PC-3 (cell line): ENCODE measurements at regions of chr3 and their contacts with region 1.

Region 1: DNA sequence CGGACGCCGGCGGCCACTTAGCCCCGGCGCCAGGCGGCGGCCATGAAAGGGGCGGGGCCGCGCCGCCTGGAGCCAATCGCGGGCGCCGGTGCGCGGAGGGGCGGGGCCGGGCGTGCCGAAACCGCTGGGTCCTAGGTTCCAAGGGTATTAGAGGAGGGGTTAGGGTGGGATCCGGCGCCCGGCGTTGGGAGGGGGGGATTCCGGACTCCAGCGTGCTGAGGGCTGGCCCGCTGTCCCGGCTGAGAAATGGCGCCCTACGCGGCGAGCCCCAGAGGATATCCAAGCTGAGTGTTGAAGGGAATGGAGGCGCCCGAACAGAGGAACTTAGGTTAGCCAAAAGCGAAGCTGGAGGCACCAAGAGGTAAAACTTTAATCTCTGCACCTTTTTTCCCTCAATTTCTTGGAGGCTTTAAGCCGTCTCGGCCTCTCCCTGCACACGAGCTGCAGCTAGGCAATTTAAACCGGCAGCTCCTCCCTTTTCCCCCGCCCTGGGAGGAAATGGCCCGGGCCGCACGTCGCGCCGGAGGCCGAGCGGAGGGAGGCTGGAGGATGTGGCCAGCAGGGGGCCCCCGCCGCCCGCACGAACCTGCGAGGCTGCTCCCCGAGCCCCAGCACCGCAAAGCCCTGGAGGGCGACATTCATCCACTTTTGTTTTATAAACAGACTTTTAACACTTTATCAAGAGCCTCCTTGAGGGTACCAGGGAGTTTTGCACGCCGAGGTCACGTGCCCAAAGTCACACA is at the start of gene XXYLT1:
- DNase-seq: peak; percentile 91
- ATAC-seq: peak; percentile 81
- H3K4me3 ChIP-seq: peak within 1 kb of the TSS; percentile 82
- H3K27ac ChIP-seq: peak within 1 kb of the TSS; percentile 57
- H3K4me1 ChIP-seq: peaks cover 21% of the 10 kb centered on the region
- H3K27me3 ChIP-seq: no peaks in the 10 kb centered on the region
- CTCF ChIP-seq: peak; percentile 98
- total RNA-seq, gene XXYLT1: 25.5 and 27.8 TPM in 2 replicates

Region 2: GRCh38 chr3:195522254-195523023 is 251.2 kb after region 1 on chr3:
- CTCF ChIA-PET with region 1: interaction called, 22 read pairs
- POLR2A ChIA-PET with region 1: no interaction called
- intact Hi-C with region 1: loop called (anchors 1 kb)
- DNase-seq: peak; percentile 57
- ATAC-seq: no peak
- H3K4me3 ChIP-seq: no peak overlapping the region
- H3K27ac ChIP-seq: no peak overlapping the region
- H3K4me1 ChIP-seq: peaks cover 23% of the 10 kb centered on the region
- H3K27me3 ChIP-seq: no peaks in the 10 kb centered on the region
- CTCF ChIP-seq: peak; percentile 91

Region 3: GRCh38 chr3:195542698-195543499 is 271.6 kb after region 1 on chr3 and contains the start of gene PPP1R2:
- CTCF ChIA-PET with region 1: interaction called, 20 read pairs
- POLR2A ChIA-PET with region 1: no interaction called
- intact Hi-C with region 1: loop called (anchors 5 kb)
- DNase-seq: peak; percentile 94
- ATAC-seq: peak; percentile 82
- H3K4me3 ChIP-seq: peak within 1 kb of the TSS; percentile 79
- H3K27ac ChIP-seq: no peak within 1 kb of the TSS
- H3K4me1 ChIP-seq: peaks cover 38% of the 10 kb centered on the region
- H3K27me3 ChIP-seq: no peaks in the 10 kb centered on the region
- CTCF ChIP-seq: no peak
- total RNA-seq, gene PPP1R2: 132 and 150 TPM in 2 replicates

Region 4: DNA sequence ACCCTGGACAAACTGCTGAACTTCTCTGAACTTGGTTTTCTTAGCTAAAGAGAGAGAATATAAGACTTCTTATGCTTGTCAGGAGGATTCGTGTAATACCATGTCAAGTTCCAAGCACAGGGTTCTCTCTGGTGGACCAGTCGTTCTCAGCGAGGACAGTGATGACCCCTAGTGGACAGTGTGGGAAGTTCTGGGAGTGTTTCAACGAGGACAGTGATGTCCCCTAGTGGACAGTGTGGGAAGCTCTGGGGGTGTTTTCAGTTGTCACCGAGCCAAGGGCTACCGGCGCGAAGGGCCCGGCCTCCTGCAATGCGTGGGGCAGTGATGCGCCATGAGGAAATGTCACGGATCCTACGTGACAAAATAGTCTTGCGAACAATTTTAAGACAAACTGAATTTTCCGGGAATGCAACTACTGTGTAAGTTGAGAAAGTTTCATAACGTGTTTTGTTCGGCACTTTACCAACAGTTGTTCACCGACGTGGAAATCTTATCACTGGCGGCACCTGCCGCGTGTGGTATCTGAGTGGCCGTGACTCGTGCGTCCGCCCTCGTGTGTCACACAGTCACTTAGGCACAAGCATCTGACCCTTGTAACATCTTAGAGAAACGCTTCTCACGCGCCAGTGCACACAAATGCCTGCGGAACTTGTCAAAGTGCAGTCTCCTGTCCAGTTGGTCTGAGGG is 579.7 kb after region 1 on chr3:
- CTCF ChIA-PET with region 1: no interaction called
- POLR2A ChIA-PET with region 1: no interaction called
- intact Hi-C with region 1: loop called (anchors 5 kb)
- DNase-seq: peak; percentile 96
- ATAC-seq: peak; percentile 73
- H3K4me3 ChIP-seq: no peak overlapping the region
- H3K27ac ChIP-seq: no peak overlapping the region
- H3K4me1 ChIP-seq: peaks cover 7% of the 10 kb centered on the region
- H3K27me3 ChIP-seq: no peaks in the 10 kb centered on the region
- CTCF ChIP-seq: peak; percentile 100